Dorsolateral prefrontal cortex (tissue), 120 donors: ENCODE measurements at regions of chr3 and their contacts with region 1.

Region 1: DNA sequence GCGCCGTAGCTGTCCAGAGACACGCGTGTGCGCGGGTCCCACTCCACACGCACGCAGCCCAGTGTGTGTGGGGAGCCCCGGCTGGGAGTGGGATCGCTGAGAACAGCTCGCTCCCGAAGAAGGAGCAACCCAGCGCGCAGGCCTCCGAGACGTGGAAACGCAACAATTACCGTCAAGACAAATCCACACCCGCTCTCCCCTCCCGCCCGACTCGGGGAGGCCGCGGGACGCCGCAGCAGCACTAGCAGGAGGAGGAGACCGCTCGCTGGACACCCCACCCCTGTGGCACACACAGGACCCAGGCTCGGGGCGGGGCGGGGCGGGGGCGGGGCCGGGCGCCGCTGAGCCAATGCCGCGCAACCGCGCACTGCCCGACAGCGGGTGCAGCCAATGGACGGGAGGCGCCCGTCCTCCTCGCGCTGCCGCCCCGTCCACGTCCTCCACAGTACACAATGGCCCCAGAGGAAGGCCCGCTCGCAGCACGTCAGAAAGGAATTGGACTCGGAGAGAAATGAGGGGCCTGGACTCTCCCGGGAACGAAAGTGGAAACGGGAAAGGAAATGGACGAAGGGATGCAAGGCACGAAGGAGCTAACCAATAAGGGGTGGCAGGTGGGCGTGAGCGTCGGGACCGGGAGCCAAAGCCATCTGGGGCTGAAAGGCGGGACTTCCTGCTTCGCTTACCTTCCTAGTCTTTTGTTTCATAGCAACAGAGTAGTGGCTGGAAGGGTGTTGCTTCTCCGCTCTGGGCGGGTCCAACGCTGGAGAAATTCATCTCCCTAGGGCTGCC is at the start of gene CBLB:
- DNase-seq: peak; percentile 80 to 94 (median 91)
- H3K4me3 ChIP-seq: peak within 1 kb of the TSS; percentile 61 to 98 (median 91)
- H3K27ac ChIP-seq: peak within 1 kb of the TSS; percentile 81 to 99 (median 95)
- H3K27me3 ChIP-seq: no peaks in the 10 kb centered on the region
- CTCF ChIP-seq: peak in 15 of 56 donors; percentile 9 to 53 (median 16)
- total RNA-seq, gene CBLB: 13.4 to 34.8 (median 20.8) TPM

Region 2: GRCh38 chr3:105691633-105692032 is 177.3 kb before region 1 on chr3:
- intact Hi-C with region 1: loop called in 1 of 2 experiments (anchors 10 kb)
- DNase-seq: no peak
- H3K4me3 ChIP-seq: no peak overlapping the region
- H3K27ac ChIP-seq: no peak overlapping the region
- H3K27me3 ChIP-seq: no peaks in the 10 kb centered on the region
- CTCF ChIP-seq: no peak

Region 3: GRCh38 chr3:105747060-105747541 is 121.8 kb before region 1 on chr3:
- intact Hi-C with region 1: loop called in 1 of 2 experiments (anchors 5 kb)
- DNase-seq: no peak
- H3K4me3 ChIP-seq: no peak overlapping the region
- H3K27ac ChIP-seq: no peak overlapping the region
- H3K27me3 ChIP-seq: no peaks in the 10 kb centered on the region
- CTCF ChIP-seq: no peak